PC-9 (cell line): ENCODE measurements at regions of chr11 and their contacts with region 1.

Region 1: DNA sequence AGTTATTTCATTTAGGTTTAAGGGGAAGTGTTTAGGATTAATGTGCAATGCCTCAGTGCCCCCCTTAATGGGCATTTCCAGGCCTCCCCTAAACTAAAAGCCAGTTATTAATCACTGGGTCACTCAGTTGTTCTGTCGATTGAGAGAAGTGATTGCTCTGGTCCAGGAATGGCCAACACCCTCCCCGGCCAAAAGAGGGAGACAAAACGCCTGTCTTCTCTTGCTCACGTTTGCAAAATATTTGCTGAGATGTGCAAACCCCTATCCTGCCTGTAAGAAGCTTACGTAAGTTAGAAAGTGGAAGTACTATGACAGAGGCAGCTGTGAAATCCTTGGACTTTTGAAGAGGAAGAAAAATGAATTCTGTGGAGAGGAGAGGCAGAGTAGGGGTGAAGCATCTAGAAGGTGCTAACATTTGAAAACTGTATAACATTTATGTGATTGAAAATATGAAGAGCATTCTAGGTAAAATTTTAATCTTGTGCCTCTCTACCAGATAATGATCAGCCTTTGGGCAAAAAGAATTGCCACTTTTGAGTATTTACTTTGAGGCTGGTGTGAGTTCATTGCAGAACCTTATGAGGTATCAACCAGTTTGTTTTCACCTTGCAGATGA is 37.7 kb downstream of the NTM start:
- DNase-seq: peak in 1 of 2 experiments; percentile 64
- H3K4me3 ChIP-seq: no peak overlapping the region
- H3K27ac ChIP-seq: no peak overlapping the region
- H3K4me1 ChIP-seq: no peaks in the 10 kb centered on the region
- H3K27me3 ChIP-seq: no peaks in the 10 kb centered on the region; the same call in 1 of the 2 replicates
- CTCF ChIP-seq: peak; percentile 48

Region 2: GRCh38 chr11:130924770-130925169 is 483.4 kb before region 1 on chr11:
- CTCF ChIA-PET with region 1: no interaction called
- POLR2A ChIA-PET with region 1: no interaction called
- intact Hi-C with region 1: loop called (anchors 5 kb)
- DNase-seq: no peak
- H3K4me3 ChIP-seq: no peak overlapping the region
- H3K27ac ChIP-seq: no peak overlapping the region
- H3K4me1 ChIP-seq: no peaks in the 10 kb centered on the region
- H3K27me3 ChIP-seq: peaks cover 40% of the 10 kb centered on the region
- CTCF ChIP-seq: no peak

Region 3: DNA sequence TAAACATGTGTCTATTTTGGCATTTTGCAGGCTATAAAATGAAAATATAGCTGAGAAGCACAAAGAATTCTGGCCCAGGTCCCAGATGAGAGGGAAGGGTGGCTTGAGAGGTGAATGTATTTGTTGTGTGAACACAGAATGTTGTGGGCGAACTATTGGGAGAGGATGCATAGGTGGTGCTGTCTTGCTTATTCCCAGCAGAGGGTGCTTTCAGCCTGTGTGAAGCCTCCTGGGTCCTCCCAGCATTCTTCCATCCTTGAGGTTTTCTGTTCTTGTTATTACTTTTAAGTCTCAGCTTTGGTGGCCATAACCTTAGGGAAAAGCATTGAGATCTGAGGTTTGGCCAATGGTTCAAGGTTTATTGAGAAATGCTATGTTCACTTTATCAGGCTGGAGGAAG is 383.1 kb before region 1 on chr11:
- CTCF ChIA-PET with region 1: no interaction called
- POLR2A ChIA-PET with region 1: no interaction called
- intact Hi-C with region 1: loop called (anchors 1 kb)
- DNase-seq: peak in 1 of 2 experiments; percentile 17
- H3K4me3 ChIP-seq: no peak overlapping the region
- H3K27ac ChIP-seq: no peak overlapping the region
- H3K4me1 ChIP-seq: no peaks in the 10 kb centered on the region
- H3K27me3 ChIP-seq: no peaks in the 10 kb centered on the region
- CTCF ChIP-seq: peak; percentile 78

Region 4: GRCh38 chr11:131430477-131431208 is 22.5 kb after region 1 on chr11:
- CTCF ChIA-PET with region 1: no interaction called
- POLR2A ChIA-PET with region 1: no interaction called
- intact Hi-C with region 1: no loop called
- DNase-seq: no peak
- H3K4me3 ChIP-seq: no peak overlapping the region
- H3K27ac ChIP-seq: no peak overlapping the region
- H3K4me1 ChIP-seq: no peaks in the 10 kb centered on the region
- H3K27me3 ChIP-seq: no peaks in the 10 kb centered on the region
- CTCF ChIP-seq: no peak

Region 5: DNA sequence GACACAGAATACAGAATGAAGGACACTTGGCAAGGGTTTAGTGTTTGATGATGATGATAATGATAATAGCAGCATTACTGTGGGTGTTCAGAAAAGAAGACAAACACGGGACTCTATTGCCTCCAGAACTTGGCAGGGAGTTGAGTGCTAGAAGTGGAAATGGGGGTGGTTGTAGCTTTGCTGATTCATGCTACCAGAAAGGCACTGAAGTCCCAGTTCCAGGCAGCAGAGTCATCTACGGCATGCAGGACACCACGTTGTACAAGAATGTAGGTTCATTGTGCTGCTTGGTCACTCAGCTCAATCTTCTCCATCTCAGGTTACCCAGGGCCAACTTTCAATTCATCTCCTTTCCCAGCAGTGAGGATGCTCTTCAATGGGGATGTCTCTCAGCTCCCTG is 78.0 kb after region 1 on chr11:
- CTCF ChIA-PET with region 1: interaction called, 4 read pairs
- POLR2A ChIA-PET with region 1: no interaction called
- intact Hi-C with region 1: loop called (anchors 1 kb)
- DNase-seq: peak; percentile 49 to 71
- H3K4me3 ChIP-seq: no peak overlapping the region
- H3K27ac ChIP-seq: no peak overlapping the region
- H3K4me1 ChIP-seq: no peaks in the 10 kb centered on the region
- H3K27me3 ChIP-seq: no peaks in the 10 kb centered on the region
- CTCF ChIP-seq: no peak

Region 6: DNA sequence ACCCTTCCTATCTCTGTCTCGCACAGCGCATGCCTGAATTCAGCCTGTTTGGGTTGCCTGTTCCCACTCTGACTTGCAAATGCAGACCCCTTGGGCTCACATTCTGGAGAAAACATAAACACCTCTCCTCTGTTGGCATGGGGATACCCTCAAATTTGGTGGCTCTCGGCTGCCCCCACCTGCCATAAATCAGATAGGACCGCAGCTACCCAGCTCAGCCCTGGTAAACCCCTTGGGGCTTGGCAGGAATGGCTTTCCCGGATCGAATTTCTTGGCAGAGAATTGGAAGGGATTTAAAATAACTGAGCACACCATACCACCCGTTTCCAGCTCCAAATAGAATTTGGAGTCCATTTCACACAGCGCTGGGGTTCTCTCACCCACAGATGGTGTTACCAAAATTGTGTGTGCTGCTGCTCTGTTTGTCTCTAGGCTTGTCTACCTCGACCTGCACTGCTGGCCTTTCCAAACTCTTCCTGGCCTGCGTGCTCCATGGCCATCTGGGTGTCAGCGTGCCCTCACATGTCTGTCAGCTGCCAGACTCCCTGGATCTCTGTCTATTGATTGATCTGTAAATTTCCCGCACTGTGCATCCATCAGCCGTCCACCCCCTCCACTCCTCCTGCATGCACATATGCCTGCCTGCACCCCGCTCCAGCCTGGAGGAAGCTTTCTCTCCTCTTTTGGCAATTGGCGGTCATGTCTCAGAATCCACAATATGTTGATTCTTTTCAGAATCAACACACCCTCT is 96.2 kb after region 1 on chr11:
- CTCF ChIA-PET with region 1: interaction called, 10 read pairs
- POLR2A ChIA-PET with region 1: no interaction called
- intact Hi-C with region 1: loop called (anchors 1 kb)
- DNase-seq: peak in 1 of 2 experiments; percentile 32
- H3K4me3 ChIP-seq: no peak overlapping the region
- H3K27ac ChIP-seq: no peak overlapping the region
- H3K4me1 ChIP-seq: no peaks in the 10 kb centered on the region
- H3K27me3 ChIP-seq: no peaks in the 10 kb centered on the region
- CTCF ChIP-seq: 0 out of 2 replicates have a peak, but pooled peaks have one; percentile 18

Region 7: DNA sequence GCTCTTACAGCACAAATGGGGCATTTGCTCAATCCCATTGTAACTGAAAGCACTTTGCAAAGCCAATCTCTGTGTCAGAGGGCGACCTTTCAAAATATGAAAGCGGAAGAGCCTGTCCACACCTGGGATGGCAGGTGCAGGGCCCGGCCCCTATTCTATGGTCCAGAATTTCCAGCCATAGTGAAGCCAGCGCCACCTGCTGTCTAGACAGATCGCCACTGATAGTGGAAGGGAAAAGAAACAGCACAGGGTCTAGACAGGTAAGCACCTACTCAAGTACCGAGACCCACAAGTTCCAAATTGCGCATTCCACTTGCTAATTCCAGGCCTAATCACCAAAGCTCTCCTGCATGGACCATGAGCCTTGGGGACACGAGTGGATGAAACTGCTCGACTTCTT is 103.7 kb after region 1 on chr11:
- CTCF ChIA-PET with region 1: interaction called, 3 read pairs
- POLR2A ChIA-PET with region 1: no interaction called
- intact Hi-C with region 1: loop called (anchors 1 kb)
- DNase-seq: peak; percentile 42 to 59
- H3K4me3 ChIP-seq: no peak overlapping the region
- H3K27ac ChIP-seq: no peak overlapping the region
- H3K4me1 ChIP-seq: no peaks in the 10 kb centered on the region
- H3K27me3 ChIP-seq: peaks cover 17% of the 10 kb centered on the region
- CTCF ChIP-seq: peak; percentile 60

Region 8: GRCh38 chr11:131561501-131561900 is 153.4 kb after region 1 on chr11:
- CTCF ChIA-PET with region 1: no interaction called
- POLR2A ChIA-PET with region 1: no interaction called
- intact Hi-C with region 1: no loop called
- DNase-seq: no peak
- H3K4me3 ChIP-seq: no peak overlapping the region
- H3K27ac ChIP-seq: no peak overlapping the region
- H3K4me1 ChIP-seq: no peaks in the 10 kb centered on the region
- H3K27me3 ChIP-seq: peaks cover 37% of the 10 kb centered on the region
- CTCF ChIP-seq: no peak

Region 9: DNA sequence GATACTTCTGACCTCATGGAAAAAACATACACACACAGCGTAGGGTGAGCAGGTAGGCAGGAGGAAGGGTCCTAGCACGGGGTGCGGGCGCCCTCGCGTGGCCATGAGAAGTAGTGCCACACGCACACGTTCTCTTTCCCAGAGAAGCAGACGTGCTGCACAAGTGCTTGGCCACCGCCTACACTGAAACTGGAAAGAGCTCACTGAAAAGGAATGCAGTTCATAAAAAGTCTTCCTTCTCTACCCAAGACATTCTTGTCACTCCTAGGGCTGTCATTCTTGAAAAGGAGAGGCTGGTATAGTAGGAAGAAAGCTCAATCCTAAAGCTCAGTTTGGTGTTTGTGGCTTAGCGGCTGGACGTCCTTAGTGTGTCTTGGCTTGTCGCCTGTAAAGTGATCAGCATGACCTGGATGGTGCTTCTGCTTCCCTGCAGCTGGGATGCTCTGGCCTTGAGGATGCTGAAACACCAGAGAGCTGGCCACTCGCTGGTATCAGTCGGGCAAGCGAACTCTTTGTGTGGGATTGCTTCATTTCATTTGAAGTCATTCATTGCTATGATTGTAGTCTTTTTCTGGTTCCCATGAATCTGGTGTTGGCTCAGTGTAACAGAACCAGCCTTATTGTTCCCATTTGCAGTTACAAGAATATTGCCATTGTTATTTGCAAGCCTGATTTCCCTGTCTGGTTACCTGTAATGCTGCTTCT is 266.1 kb after region 1 on chr11:
- CTCF ChIA-PET with region 1: no interaction called
- POLR2A ChIA-PET with region 1: no interaction called
- intact Hi-C with region 1: loop called (anchors 2 kb)
- DNase-seq: peak; percentile 41 to 55
- H3K4me3 ChIP-seq: no peak overlapping the region
- H3K27ac ChIP-seq: no peak overlapping the region
- H3K4me1 ChIP-seq: no peaks in the 10 kb centered on the region
- H3K27me3 ChIP-seq: peaks cover 46% of the 10 kb centered on the region; the same call in 1 of the 2 replicates
- CTCF ChIP-seq: peak; percentile 85